Activated T-helper 1 cell treated with anti-CD3 and anti-CD28 coated beads, Interleukin-12 subunit alpha, Interleukin-12 subunit beta, Interleukin-2, Interleukin-4 antibody, amounts not matched to agents 30 ng/mL and 10 ng/mL and 1 ng/mL, durations not matched to agents 14 hours and 24 hours and 36 hours (primary cell): ENCODE measurements at regions of chr3 and their contacts with region 1.

Region 1: GRCh38 chr3:10322352-10322710 is 1.4 kb upstream of the SEC13 start:
- DNase-seq: peak; percentile 24
- H3K4me3 Mint-ChIP-seq: peak overlapping the region; percentile 30
- H3K27ac Mint-ChIP-seq: no peak overlapping the region
- H3K4me1 Mint-ChIP-seq: peaks cover 30% of the 10 kb centered on the region
- H3K27me3 Mint-ChIP-seq: peaks cover 13% of the 10 kb centered on the region

Region 2: GRCh38 chr3:8963137-8963869 is 1359.0 kb before region 1 on chr3 and contains the start of gene RAD18:
- intact Hi-C with region 1: loop called (anchors 5 kb)
- DNase-seq: peak; percentile 91
- H3K4me3 Mint-ChIP-seq: peak within 1 kb of the TSS; percentile 98
- H3K27ac Mint-ChIP-seq: peak within 1 kb of the TSS; percentile 97
- H3K4me1 Mint-ChIP-seq: peaks cover 62% of the 10 kb centered on the region
- H3K27me3 Mint-ChIP-seq: peaks cover 7% of the 10 kb centered on the region
- total RNA-seq, gene RAD18: 52.8 and 54.2 TPM in 2 replicates

Region 3: GRCh38 chr3:9649791-9650521 is 672.4 kb before region 1 on chr3:
- intact Hi-C with region 1: loop called (anchors 2 kb)
- DNase-seq: no peak
- H3K4me3 Mint-ChIP-seq: peak overlapping the region; percentile 93
- H3K27ac Mint-ChIP-seq: peak overlapping the region; percentile 82
- H3K4me1 Mint-ChIP-seq: peaks cover 13% of the 10 kb centered on the region
- H3K27me3 Mint-ChIP-seq: no peaks in the 10 kb centered on the region

Region 4: DNA sequence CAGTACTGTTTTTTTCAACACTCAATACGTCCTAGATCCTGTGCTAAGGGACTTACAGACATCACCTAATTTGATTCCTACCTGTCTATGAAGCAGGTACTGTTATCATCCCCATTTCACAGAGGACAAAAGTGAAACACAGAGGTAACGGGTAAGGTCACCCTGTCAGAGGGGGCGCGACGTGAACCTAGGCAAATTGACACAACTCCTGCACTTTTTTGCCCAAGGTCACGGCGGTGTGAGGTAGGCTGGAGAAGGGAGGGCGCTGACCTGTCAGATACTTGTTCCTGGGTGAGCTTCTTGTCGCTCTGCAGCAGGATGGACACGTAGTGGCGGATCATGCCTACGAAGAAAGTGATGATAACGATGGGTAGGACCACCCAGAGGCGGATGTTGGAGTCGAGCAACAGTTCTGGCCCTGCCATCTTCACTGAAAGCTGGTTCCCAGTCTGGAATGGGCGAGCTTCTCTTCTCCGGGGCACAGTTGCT is 336.1 kb before region 1 on chr3:
- intact Hi-C with region 1: loop called (anchors 1 kb)
- DNase-seq: no peak
- H3K4me3 Mint-ChIP-seq: peak overlapping the region; percentile 97
- H3K27ac Mint-ChIP-seq: peak overlapping the region; percentile 98
- H3K4me1 Mint-ChIP-seq: peaks cover 27% of the 10 kb centered on the region
- H3K27me3 Mint-ChIP-seq: no peaks in the 10 kb centered on the region

Region 5: GRCh38 chr3:10242182-10243065 is 79.9 kb before region 1 on chr3:
- intact Hi-C with region 1: loop called (anchors 2 kb)
- DNase-seq: peak; percentile 81
- H3K4me3 Mint-ChIP-seq: peak overlapping the region; percentile 68
- H3K27ac Mint-ChIP-seq: peak overlapping the region; percentile 98
- H3K4me1 Mint-ChIP-seq: peaks cover 57% of the 10 kb centered on the region
- H3K27me3 Mint-ChIP-seq: no peaks in the 10 kb centered on the region